ENCODE measurements at regions of chr18 and their contacts with region 1.

Region 1: DNA sequence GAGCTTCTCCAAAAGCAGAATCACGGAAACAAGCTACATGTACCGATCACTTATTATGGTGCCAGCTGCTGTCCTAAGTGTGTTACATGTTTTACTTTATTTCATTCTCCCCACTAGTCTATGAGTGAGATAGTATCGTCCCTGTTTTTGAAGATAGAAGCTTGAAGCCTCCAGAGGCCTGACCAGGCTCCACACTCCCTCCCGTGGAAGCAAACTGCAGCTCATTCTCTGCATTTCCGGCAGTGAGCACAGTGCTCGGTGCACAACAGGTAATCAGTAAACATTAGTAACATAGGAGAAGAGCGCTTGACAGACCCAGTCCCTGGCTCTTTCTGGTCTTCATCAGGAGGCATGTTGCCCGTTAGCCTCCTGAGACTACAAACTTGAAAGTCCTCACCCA is 72.8 kb downstream of the ZBTB7C start:
- DNase-seq: no peak
- ATAC-seq: no peak
- H3K4me3 ChIP-seq: no peak overlapping the region
- H3K27ac ChIP-seq: no peak overlapping the region
- H3K4me1 ChIP-seq: no peaks in the 10 kb centered on the region
- H3K27me3 ChIP-seq: no peaks in the 10 kb centered on the region
- CTCF ChIP-seq: no peak

Region 2: DNA sequence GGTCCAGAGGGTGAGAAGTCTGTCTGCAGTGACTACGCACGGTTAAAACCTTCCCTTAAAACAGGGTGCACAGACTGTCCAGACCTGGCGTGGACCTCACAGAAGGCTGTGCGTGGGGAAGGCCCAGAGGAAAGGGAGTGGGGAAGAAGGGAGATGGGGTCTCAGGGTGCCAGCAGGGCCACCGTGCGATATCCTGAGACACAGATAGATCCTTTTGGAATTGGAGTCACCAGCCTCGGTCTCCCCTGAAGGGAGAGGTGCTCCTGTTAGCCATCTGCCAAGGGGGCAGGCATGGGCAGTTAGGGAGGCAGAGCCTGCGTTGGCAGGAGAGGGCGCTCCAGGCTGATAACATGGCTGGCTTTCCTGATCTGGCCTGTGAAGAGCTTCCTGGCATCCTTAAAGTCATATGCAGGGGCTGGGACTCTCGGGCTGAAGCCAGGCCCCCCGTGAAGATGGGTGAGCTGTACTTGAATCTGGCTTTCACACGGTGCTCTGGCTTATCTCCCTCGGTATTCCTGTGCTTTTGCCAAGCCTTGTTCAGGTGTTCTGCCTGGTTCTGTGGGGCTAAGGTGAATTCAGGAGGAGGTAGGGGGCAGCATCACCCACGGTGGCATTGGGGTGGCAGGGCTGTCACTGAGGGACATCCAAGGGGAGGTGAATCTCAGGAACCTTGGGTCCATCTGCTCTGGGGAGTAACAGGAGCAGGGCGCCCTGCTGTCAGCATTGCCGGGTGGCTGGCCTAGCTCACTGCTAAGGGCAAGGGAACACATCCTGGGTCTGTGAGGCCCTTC is 298.7 kb before region 1 on chr18:
- intact Hi-C with region 1: loop called in 2 of 3 experiments (anchors 5 to 10 kb)
- DNase-seq: peak in 3 of 6 donors; percentile 34 to 53 (median 43)
- ATAC-seq: peak; percentile 55 to 82 (median 78)
- H3K4me3 ChIP-seq: no peak overlapping the region
- H3K27ac ChIP-seq: no peak overlapping the region
- H3K4me1 ChIP-seq: no peaks in the 10 kb centered on the region
- H3K27me3 ChIP-seq: no peaks in the 10 kb centered on the region
- CTCF ChIP-seq: peak in 1 of 4 donors; percentile 19